ENCODE measurements at regions of chrX and their contacts with region 1.

Region 1: DNA sequence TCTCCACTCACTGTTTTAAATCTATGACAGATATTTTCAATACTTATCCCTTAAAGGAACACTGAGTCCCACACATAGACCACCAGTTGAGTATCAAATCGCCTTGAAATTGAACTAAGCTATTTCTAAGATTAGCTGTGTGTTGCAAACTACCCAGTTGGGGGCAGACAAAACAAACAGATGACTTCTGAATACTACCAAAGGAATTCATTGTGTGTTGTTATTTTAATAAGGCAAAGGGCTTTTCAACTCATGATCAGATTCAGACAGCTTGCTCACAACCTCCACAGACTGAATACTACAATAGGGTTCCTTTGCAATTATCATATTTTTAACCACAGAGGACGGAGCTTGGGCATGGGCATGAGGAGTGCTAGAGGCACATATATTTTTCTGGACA is 283.0 kb upstream of the GPC4 start:
- DNase-seq: no peak

Region 2: DNA sequence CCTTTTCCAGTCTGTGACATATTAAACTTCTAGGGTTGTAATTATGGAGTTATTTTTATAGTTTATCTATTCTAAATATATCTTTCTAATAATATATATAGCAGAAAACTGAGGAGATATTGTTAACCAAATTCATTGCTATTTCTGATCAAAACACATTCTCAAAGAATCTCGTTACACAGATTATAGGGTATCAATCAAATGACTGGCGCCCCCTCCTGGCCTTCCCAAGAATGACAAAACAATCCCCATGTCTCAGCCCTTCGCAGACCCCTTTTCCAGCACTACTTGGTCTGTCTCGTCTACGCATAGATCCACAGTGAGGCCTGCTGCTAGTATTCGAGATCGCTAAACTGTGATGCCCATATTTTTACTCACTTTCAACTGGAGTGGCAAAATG is 77.8 kb after region 1 on chrX:
- intact Hi-C with region 1: loop called (anchors 5 kb)
- DNase-seq: peak in 5 of 10 donors; percentile 17 to 64 (median 45)

Region 3: GRCh38 chrX:134369576-134369975 is 671.3 kb after region 1 on chrX:
- intact Hi-C with region 1: no loop called
- DNase-seq: no peak